BJ (cell line): ENCODE measurements at regions of chr1 and their contacts with region 1.

Region 1: GRCh38 chr1:196148367-196148970 is 459.8 kb downstream of the KCNT2 start:
- DNase-seq: peak; percentile 9
- H3K4me3 ChIP-seq: no peak overlapping the region
- H3K27me3 ChIP-seq: no peaks in the 10 kb centered on the region
- CTCF ChIP-seq: peak; percentile 38

Region 2: DNA sequence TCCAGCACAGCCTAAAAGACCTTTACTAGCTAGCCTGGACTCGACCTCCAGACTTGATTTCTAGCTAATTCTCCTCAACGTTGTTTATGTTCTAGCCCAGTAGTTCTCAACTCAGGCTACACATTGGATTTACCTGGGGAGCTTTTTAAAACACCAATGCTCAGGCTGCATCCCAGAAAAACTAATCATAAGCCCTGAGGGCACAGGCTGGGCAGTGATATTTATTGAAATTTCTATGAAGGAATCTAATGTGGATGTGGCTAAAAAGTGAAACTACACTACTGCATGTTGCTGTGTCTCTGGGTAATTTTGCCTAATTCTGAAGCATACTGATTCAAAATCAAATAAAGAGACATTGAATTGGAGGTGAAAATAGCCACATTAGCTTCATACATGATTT is 19.6 kb before region 1 on chr1:
- CTCF ChIA-PET with region 1: no interaction called
- POLR2A ChIA-PET with region 1: no interaction called
- DNase-seq: no peak
- H3K4me3 ChIP-seq: no peak overlapping the region
- H3K27me3 ChIP-seq: no peaks in the 10 kb centered on the region
- CTCF ChIP-seq: no peak

Region 3: DNA sequence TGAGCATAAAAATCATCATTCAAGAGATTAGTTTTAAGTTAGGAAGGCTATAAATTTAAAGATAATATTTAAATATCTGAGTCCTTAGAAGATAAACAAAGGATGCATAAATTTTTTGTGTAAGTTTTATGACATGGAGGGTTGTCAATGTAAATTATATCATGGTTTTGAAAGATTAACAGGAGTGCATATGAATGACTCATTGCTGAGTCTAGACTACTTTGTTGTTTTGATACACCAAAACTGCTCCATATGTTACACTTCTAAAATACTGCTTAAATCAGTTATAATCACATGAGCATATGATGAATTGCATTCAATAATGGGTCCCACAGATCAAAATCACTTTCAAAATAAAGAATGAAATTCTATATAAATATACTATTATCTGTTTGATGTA is 147.3 kb after region 1 on chr1:
- CTCF ChIA-PET with region 1: interaction called, 11 read pairs
- POLR2A ChIA-PET with region 1: no interaction called
- DNase-seq: no peak
- H3K4me3 ChIP-seq: no peak overlapping the region
- H3K27me3 ChIP-seq: no peaks in the 10 kb centered on the region
- CTCF ChIP-seq: no peak

Region 4: GRCh38 chr1:196309386-196309785 is 160.9 kb after region 1 on chr1:
- CTCF ChIA-PET with region 1: interaction called, 48 read pairs
- POLR2A ChIA-PET with region 1: no interaction called
- DNase-seq: peak; percentile 9
- H3K4me3 ChIP-seq: no peak overlapping the region
- H3K27me3 ChIP-seq: no peaks in the 10 kb centered on the region
- CTCF ChIP-seq: peak; percentile 17; the same call in 1 of the 2 replicates

Region 5: GRCh38 chr1:196317535-196318522 is 169.4 kb after region 1 on chr1:
- CTCF ChIA-PET with region 1: interaction called, 10 read pairs
- POLR2A ChIA-PET with region 1: no interaction called
- DNase-seq: no peak
- H3K4me3 ChIP-seq: no peak overlapping the region
- H3K27me3 ChIP-seq: no peaks in the 10 kb centered on the region
- CTCF ChIP-seq: peak; percentile 73

Region 6: GRCh38 chr1:196660852-196661251 is 512.4 kb after region 1 on chr1:
- CTCF ChIA-PET with region 1: interaction called, 10 read pairs
- POLR2A ChIA-PET with region 1: no interaction called
- DNase-seq: no peak
- H3K4me3 ChIP-seq: no peak overlapping the region
- H3K27me3 ChIP-seq: no peaks in the 10 kb centered on the region
- CTCF ChIP-seq: peak; percentile 27; the same call in 1 of the 2 replicates